ENCODE measurements at regions of chr11 and their contacts with region 1.

Region 1: DNA sequence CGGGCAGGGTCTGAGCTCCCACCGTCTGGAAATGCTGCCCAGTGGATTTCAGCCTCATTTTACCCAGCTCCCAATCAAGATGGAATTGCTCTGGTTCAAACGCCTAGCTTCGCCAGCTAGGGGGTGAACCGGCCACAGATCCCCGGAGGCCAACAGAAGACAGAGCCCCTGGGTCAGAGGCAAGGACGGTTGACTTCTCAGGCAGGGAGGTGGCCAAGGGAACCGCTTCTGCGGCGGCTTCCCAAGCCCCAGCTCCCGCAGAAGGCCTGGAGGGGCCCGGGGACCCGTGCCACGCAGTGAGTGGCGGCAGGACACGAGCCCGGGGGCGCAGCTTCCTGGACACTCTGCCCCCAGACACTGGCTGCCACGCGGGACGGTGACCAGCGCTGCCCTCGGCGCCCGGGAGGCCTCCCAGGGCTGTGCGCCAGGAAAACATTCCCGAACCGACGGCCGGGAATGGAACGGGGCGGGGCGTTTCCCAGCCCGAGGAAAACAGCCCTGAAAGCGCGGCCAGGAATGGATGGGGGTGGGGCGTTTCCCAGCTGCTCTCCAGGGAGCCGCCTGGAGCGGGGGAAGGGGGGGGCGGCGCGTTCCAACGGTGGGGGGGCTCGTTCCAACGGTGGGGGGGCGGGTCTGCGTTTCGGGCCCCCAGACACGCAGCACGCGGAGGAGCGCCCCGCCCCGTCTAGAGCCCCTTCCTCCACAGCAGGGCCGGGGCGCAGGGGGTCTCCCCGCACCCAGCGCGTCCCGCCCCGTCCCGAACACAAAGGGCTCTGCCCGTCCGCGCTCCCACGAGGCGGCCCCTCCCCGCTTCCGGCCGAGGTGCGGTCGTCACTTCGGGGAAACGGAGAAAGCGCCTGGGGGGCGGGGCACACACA is 13.5 kb upstream of the B4GALNT4 start:
- DNase-seq: peak; percentile 65
- ATAC-seq: peak; percentile 94
- H3K4me3 ChIP-seq: peak overlapping the region; percentile 36 to 54
- H3K27ac ChIP-seq: peak overlapping the region; percentile 99
- H3K4me1 ChIP-seq: peaks cover 12 to 16% of the 10 kb centered on the region in 2 experiments
- H3K27me3 ChIP-seq: no peaks in the 10 kb centered on the region
- CTCF ChIP-seq: no peak
- POLR2A ChIP-seq: peak; percentile 11
- RAD21 ChIP-seq: peak; percentile 41

Region 2: GRCh38 chr11:250740-251299 is 105.0 kb before region 1 on chr11:
- CTCF ChIA-PET with region 1: interaction called, 10 read pairs
- POLR2A ChIA-PET with region 1: no interaction called
- RAD21 ChIA-PET with region 1: no interaction called
- intact Hi-C with region 1: no loop called
- DNase-seq: no peak
- ATAC-seq: peak; percentile 83
- H3K4me3 ChIP-seq: no peak overlapping the region
- H3K27ac ChIP-seq: no peak overlapping the region
- H3K4me1 ChIP-seq: no peaks in the 10 kb centered on the region
- H3K27me3 ChIP-seq: no peaks in the 10 kb centered on the region
- CTCF ChIP-seq: peak; percentile 56 to 81 (median 66); a peak in 5 of 6 replicates
- POLR2A ChIP-seq: no peak
- RAD21 ChIP-seq: peak; percentile 53

Region 3: DNA sequence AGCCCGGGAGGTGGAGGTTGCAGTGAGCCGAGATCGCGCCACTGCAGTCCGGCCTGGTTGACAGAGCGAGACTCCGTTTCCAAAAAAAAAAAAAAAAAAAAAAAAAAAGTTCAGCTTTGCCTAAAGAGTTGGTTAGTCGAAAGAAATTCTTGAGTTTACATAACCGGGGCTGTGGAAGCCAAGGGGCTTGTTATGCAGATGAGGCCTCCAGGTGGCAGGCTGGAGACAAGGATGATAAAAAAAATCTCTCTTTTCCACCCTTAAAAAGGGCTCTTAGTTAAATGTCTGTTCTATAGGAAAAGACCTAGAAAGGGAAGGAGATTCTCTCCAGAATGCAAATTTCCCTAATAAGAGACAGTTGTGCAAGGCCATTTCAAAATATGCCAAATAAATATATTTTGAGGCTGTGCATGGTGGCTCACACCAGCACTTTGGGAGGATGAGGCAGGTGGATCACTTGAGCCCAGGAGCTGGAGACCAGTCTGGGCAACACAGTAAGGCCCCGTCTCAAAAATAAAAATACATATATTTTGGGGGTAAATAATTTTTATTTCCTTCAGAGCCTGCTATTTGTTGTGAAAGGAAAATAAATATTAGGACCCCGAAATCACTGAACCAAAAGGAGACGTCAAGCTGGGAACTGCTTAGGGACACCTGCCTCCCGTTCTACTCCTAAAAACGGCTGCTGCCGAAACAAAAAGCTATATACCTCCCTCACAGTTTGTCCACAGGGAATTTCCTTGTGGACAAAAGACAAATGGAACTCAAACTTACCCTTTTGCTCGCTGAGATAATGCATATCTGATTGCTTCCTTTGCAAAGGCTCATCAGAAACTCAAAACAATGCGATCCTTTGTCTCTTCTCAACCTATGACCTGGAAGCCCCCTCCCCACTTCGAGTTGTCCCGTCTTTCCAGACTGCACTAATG is 50.6 kb before region 1 on chr11:
- CTCF ChIA-PET with region 1: interaction called, 3 read pairs
- POLR2A ChIA-PET with region 1: no interaction called
- RAD21 ChIA-PET with region 1: interaction called in 1 of 2 experiments, 5 read pairs
- intact Hi-C with region 1: loop called (anchors 5 kb)
- DNase-seq: no peak
- ATAC-seq: peak; percentile 46; the same call in 1 of the 2 replicates
- H3K4me3 ChIP-seq: no peak overlapping the region
- H3K27ac ChIP-seq: no peak overlapping the region
- H3K4me1 ChIP-seq: peaks cover 13 to 24% of the 10 kb centered on the region in 2 experiments
- H3K27me3 ChIP-seq: no peaks in the 10 kb centered on the region
- CTCF ChIP-seq: peak; percentile 64 to 68 (median 67); a peak in 5 of 6 replicates
- POLR2A ChIP-seq: no peak
- RAD21 ChIP-seq: peak; percentile 79

Region 4: DNA sequence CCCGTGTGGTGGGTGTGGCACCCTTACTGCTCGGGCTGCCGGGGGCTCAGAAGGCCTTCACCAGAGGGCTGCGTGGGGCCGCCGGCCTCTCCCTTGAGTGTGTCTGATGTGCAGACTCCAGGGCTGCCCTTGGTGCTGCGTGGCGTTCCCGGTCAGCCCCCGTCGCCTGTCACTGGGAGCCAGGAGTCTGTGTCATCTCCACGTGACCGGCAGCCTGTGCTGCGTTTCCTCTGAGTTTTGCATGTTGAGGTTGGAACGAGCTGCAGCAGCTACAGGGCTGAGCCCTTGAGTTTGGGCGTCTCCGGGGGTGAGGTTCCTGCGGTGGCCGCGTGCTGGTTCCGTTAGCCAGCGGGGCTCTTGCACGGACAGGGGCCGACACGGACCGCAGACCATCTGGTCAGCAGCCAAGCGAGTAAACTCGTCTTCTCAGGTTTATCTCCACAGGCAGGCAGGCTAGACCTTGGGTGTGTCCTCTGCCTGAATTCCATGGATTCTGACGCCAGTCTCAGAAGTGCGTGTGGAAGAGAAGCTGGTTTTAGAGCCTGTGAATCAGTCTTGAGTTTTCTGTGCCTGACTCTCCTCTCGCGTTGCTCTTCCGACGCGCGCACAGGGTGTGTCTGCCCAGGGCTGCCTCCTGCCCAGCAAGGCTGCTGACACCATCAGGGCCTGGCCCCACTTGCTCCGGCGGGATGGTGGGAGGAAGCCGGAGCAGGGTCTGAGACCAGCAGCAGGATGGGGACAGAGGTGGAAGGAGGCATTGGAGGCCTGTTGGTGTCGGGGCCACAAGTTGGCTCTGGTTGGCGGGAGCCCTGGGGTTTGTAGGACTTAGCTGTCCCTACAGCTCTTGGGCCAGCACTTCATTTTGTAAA is 104.7 kb after region 1 on chr11:
- CTCF ChIA-PET with region 1: no interaction called
- POLR2A ChIA-PET with region 1: no interaction called
- RAD21 ChIA-PET with region 1: no interaction called
- intact Hi-C with region 1: no loop called
- DNase-seq: no peak
- ATAC-seq: no peak
- H3K4me3 ChIP-seq: no peak overlapping the region
- H3K27ac ChIP-seq: no peak overlapping the region
- H3K4me1 ChIP-seq: no peaks in the 10 kb centered on the region
- H3K27me3 ChIP-seq: no peaks in the 10 kb centered on the region
- CTCF ChIP-seq: no peak
- POLR2A ChIP-seq: no peak
- RAD21 ChIP-seq: no peak

Measured in HCT116 (cell line).